Psoas muscle (tissue), 8 donors: ENCODE measurements at regions of chr14 and their contacts with region 1.

Region 1: GRCh38 chr14:75230140-75231045 is 48.2 kb upstream of the FOS start:
- DNase-seq: peak in 1 of 2 donors; percentile 62
- ATAC-seq: peak; percentile 23 to 73 (median 59)
- H3K4me3 ChIP-seq: no peak overlapping the region
- H3K27ac ChIP-seq: peak overlapping the region; percentile 71
- H3K4me1 ChIP-seq: peaks cover 16% of the 10 kb centered on the region
- H3K27me3 ChIP-seq: no peaks in the 10 kb centered on the region
- CTCF ChIP-seq: peak; percentile 16

Region 2: GRCh38 chr14:75147423-75148071 is 82.8 kb before region 1 on chr14:
- intact Hi-C with region 1: loop called in 1 of 2 experiments (anchors 5 kb)
- DNase-seq: peak; percentile 56 to 76
- ATAC-seq: peak; percentile 50 to 72 (median 65)
- H3K4me3 ChIP-seq: no peak overlapping the region
- H3K27ac ChIP-seq: peak overlapping the region; percentile 37
- H3K4me1 ChIP-seq: peaks cover 38% of the 10 kb centered on the region
- H3K27me3 ChIP-seq: no peaks in the 10 kb centered on the region
- CTCF ChIP-seq: peak; percentile 27

Region 3: DNA sequence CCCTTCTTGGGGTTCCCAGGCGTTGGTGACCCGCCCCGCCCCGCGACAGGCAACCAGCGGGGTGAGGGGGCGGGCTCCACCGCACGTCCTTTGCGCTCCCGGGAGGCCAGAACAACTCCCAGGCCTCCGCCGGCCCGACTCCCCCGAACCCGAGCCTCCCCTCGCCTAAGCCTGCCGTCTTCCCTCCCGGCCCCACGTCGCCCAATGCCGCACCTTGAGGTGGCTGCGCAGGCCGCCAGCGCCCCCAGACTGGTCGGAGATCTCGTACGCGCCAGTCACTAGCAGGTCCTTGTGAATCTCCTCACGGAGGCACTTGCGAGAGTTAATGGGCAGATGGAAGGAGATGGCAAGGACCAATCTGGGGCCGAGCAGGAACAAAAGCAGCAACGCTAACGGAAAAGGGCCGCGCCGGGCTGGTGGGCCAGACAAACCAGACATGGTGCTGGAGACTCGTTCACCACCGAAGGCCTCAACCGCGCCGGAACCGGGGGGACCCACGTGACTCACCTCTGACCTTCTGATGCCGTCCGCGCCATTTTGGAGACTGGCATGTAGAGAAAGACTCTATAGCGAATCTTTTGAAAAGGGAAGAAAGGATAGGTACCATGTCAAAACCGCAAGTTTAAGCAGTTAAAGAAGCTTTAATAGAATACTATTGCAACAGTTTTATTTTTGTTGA is 54.1 kb before region 1 on chr14 and contains the start of gene TMED10:
- intact Hi-C with region 1: loop called in 1 of 2 experiments (anchors 5 kb)
- DNase-seq: peak; percentile 89 to 95
- ATAC-seq: peak; percentile 95
- H3K4me3 ChIP-seq: peak within 1 kb of the TSS; percentile 90
- H3K27ac ChIP-seq: peak within 1 kb of the TSS; percentile 99
- H3K4me1 ChIP-seq: peaks cover 23% of the 10 kb centered on the region
- H3K27me3 ChIP-seq: no peaks in the 10 kb centered on the region
- CTCF ChIP-seq: no peak
- total RNA-seq, gene TMED10: 128 to 203 (median 159) TPM

Region 4: GRCh38 chr14:75278422-75279161 is 48.2 kb after region 1 on chr14 and contains the start of gene FOS:
- intact Hi-C with region 1: loop called in 1 of 2 experiments (anchors 5 kb)
- DNase-seq: peak; percentile 90 to 95
- ATAC-seq: peak; percentile 76 to 85 (median 83)
- H3K4me3 ChIP-seq: peak within 1 kb of the TSS; percentile 83
- H3K27ac ChIP-seq: peak within 1 kb of the TSS; percentile 98
- H3K4me1 ChIP-seq: peaks cover 30% of the 10 kb centered on the region
- H3K27me3 ChIP-seq: no peaks in the 10 kb centered on the region
- CTCF ChIP-seq: no peak
- total RNA-seq, gene FOS: 20.7 to 279 (median 95.1) TPM

Region 5: DNA sequence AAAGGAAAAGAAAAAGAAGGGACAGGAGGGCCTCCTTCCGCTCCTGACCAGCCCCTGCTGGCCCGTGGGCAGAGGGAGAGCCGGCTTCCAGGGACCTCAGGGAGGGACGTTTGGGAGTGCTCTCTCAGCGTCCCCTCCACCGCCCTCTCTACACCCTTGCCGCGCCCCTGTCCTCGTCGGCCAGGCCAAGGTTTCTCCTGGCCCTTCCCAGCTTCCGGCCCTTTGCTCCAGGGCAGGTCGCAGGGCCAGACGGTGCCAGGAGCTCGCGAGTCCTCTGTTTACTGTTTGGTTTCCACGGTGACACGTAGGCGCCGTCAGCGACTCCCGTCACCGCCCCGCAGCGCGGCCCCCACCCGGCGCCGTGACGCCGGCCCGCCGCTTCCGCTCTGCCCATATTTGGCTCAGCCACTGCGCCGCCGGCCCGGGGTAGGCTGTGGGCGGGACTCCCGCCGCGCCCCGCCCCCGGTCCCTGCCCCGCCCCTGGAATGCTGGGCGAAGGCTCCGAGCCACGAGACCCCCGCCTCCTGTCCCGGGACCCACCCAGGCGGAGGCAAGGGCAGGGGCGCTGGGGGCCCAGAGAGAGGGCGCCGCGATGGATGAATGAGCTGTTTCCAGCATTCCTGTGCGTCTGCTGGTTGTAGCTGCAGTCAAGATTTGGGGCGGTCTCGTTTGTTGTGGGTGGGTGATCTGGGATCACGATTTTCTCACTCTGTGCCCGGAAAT is 63.7 kb after region 1 on chr14:
- intact Hi-C with region 1: loop called in 1 of 2 experiments (anchors 5 kb)
- DNase-seq: peak; percentile 96 to 98
- ATAC-seq: peak; percentile 92 to 97 (median 95)
- H3K4me3 ChIP-seq: peak overlapping the region; percentile 85
- H3K27ac ChIP-seq: peak overlapping the region; percentile 95
- H3K4me1 ChIP-seq: peaks cover 10% of the 10 kb centered on the region
- H3K27me3 ChIP-seq: no peaks in the 10 kb centered on the region
- CTCF ChIP-seq: no peak